ENCODE measurements at regions of chr14 and their contacts with region 1.

Region 1: GRCh38 chr14:24299255-24300195 is at the starts of genes DHRS1 and NOP9:
- DNase-seq: peak; percentile 89 to 97 (median 94)
- H3K4me3 ChIP-seq: peak within 1 kb of the TSS; percentile 33 to 84 (median 80)
- H3K27ac ChIP-seq: peak within 1 kb of the TSS in 4 of 5 donors; percentile 28 to 87 (median 82)
- H3K4me1 ChIP-seq: peaks cover 19 to 31% of the 10 kb centered on the region in 2 donors
- H3K27me3 ChIP-seq: no peaks in the 10 kb centered on the region
- CTCF ChIP-seq: no peak
- POLR2A ChIP-seq: peak; percentile 61 to 73
- total RNA-seq, gene DHRS1: 11.4 to 68.1 (median 36.1) TPM
- total RNA-seq, gene NOP9: 9.2 to 28.2 (median 18.2) TPM

Region 2: GRCh38 chr14:24058260-24058950 is 241.1 kb before region 1 on chr14:
- intact Hi-C with region 1: loop called in 1 of 2 experiments (anchors 10 kb)
- DNase-seq: peak in 6 of 7 donors; percentile 72 to 92 (median 86)
- H3K4me3 ChIP-seq: no peak overlapping the region
- H3K27ac ChIP-seq: no peak overlapping the region
- H3K4me1 ChIP-seq: peaks cover 0 to under 1% of the 10 kb centered on the region in 2 donors
- H3K27me3 ChIP-seq: no peaks in the 10 kb centered on the region
- CTCF ChIP-seq: peak; percentile 86 to 98 (median 92)
- POLR2A ChIP-seq: no peak

Region 3: GRCh38 chr14:24241829-24242443 is 57.6 kb before region 1 on chr14:
- intact Hi-C with region 1: loop called (anchors 1 to 10 kb)
- DNase-seq: peak; percentile 93 to 97 (median 95)
- H3K4me3 ChIP-seq: peak overlapping the region in 3 of 4 donors; percentile 56 to 93 (median 78)
- H3K27ac ChIP-seq: peak overlapping the region; percentile 94 to 99 (median 97)
- H3K4me1 ChIP-seq: peaks cover 26 to 32% of the 10 kb centered on the region in 2 donors
- H3K27me3 ChIP-seq: no peaks in the 10 kb centered on the region
- CTCF ChIP-seq: peak; percentile 57 to 91 (median 75)
- POLR2A ChIP-seq: peak in 1 of 2 donors; percentile 29

Measured in adrenal gland (tissue), 19 donors.